ENCODE measurements at regions of chr1 and their contacts with region 1.

Region 1: GRCh38 chr1:225777583-225778336 is at the start of gene SRP9:
- DNase-seq: peak; percentile 99
- ATAC-seq: peak; percentile 99
- total RNA-seq, gene SRP9: 188 TPM

Region 2: GRCh38 chr1:225554216-225554812 is 223.4 kb before region 1 on chr1:
- intact Hi-C with region 1: loop called (anchors 10 kb)
- DNase-seq: no peak
- ATAC-seq: peak; percentile 61

Region 3: DNA sequence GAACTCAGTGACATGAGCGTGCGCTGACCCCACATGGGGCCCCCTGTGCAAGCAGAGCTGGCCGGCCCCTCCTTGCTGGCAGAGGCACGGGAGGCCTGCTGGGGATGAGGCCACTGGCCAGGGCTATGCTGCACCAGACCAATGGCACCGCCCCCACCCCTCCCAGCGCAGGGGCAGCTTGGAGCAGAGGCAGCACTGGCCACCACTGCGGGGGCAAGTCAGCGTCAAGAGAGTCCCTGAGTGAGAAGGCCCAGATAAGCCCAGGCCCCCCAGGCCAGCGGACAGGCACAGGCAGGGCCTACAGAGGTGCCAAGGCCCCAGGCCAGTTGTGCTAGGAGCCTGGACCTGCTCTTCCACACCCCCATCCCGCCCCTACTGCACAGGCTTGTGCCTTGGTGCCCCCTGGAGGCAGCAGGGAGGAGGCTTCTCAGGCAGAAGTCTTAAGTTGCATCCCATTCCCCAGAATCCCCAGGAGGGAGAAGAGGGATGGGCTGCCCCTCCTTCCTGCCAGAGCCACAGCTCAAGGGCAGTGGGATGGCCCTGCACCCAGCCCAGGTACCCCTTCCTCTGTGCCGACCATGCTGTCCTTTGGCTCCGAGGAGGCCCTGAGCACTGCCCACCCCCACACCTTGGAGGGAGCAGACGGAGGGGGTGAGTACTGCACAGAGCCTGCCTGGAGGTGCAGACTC is 68.0 kb after region 1 on chr1:
- intact Hi-C with region 1: loop called (anchors 2 kb)
- DNase-seq: peak; percentile 85
- ATAC-seq: peak; percentile 77

Region 4: GRCh38 chr1:225977937-225978748 is 200.4 kb after region 1 on chr1:
- intact Hi-C with region 1: loop called (anchors 10 kb)
- DNase-seq: no peak
- ATAC-seq: no peak

Measured in Right ventricle myocardium superior (tissue), 1 donor.